PC-3 (cell line): ENCODE measurements at regions of chr4 and their contacts with region 1.

Region 1: GRCh38 chr4:37891260-37892159 is 626 bp downstream of the TBC1D1 start:
- DNase-seq: no peak
- ATAC-seq: peak; percentile 40; the same call in 1 of the 2 replicates
- H3K4me3 ChIP-seq: peak overlapping the region; percentile 69
- H3K27ac ChIP-seq: no peak overlapping the region
- H3K4me1 ChIP-seq: no peaks in the 10 kb centered on the region
- H3K27me3 ChIP-seq: no peaks in the 10 kb centered on the region
- CTCF ChIP-seq: no peak

Region 2: GRCh38 chr4:37749398-37749988 is 142.0 kb before region 1 on chr4:
- CTCF ChIA-PET with region 1: no interaction called
- POLR2A ChIA-PET with region 1: no interaction called
- intact Hi-C with region 1: no loop called
- DNase-seq: no peak
- ATAC-seq: no peak
- H3K4me3 ChIP-seq: no peak overlapping the region
- H3K27ac ChIP-seq: no peak overlapping the region
- H3K4me1 ChIP-seq: no peaks in the 10 kb centered on the region
- H3K27me3 ChIP-seq: no peaks in the 10 kb centered on the region
- CTCF ChIP-seq: no peak

Region 3: DNA sequence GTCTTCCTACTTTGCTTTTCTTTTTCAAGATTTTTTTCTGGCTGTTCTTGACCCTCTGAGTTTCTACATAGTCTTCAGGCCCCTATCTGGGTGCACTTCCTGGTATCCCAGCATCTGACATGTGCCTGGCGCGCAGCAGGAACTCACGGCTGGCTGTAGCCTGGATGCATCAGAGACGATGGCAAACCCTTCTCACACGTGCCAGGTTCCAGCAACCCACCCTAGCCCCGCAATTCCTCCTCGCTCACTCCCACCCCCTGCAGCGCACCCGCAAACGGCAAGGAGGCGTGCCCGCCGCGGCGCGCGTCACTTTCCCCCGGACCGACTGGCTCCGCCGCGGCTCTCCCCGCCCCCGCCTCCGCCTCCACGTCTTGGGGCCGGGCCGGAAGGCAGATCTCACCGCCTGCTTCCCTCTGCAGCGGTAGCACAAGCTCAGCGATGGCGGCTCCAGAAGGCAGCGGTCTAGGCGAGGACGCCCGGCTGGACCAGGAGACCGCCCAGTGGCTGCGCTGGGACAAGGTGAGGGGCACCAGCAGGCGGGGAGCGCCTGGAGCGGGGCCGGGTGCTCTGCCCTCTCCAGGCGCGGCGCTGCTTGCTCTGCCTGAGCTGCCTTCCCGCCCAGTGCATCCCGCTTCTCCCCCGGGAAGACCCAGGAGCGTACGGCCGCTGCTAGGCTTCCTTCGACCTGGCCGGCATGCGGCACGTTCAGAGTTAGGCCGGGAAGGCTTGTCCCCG is 65.0 kb before region 1 on chr4 and contains the start of gene PGM2:
- CTCF ChIA-PET with region 1: no interaction called
- POLR2A ChIA-PET with region 1: no interaction called
- intact Hi-C with region 1: loop called (anchors 2 kb)
- DNase-seq: peak; percentile 77
- ATAC-seq: peak; percentile 88
- H3K4me3 ChIP-seq: peak within 1 kb of the TSS; percentile 98
- H3K27ac ChIP-seq: peak within 1 kb of the TSS; percentile 31
- H3K4me1 ChIP-seq: peaks cover 16% of the 10 kb centered on the region
- H3K27me3 ChIP-seq: no peaks in the 10 kb centered on the region
- CTCF ChIP-seq: no peak
- total RNA-seq, gene PGM2: 21.0 and 28.6 TPM in 2 replicates